Common myeloid progenitor, CD34-positive (primary cell): ENCODE measurements at regions of chr3 and their contacts with region 1.

Region 1: GRCh38 chr3:22887664-22888291 is 315.3 kb upstream of the UBE2E2 start:
- DNase-seq: peak; percentile 44 to 72 (median 71)
- H3K4me3 ChIP-seq: no peak overlapping the region
- H3K27ac ChIP-seq: no peak overlapping the region
- H3K4me1 ChIP-seq: no peaks in the 10 kb centered on the region
- H3K27me3 ChIP-seq: no peaks in the 10 kb centered on the region

Region 2: DNA sequence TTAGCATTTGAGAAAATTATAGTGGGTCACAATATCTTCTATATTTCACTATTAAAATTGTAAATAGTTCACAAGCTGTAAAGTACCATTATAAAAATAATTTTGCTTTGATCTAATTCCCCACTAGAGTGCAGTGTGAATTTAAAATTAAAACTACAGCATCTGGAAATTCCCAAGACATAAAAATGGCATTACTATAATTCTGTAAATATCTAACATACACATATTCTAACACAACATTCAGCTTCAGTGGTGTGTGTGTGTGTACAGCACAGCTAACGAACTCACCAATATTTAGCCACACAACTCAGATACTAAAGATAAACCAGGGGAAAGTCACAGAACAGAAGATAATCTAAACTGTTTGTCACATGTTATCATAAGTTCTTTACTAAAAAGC is 711.8 kb before region 1 on chr3:
- CTCF ChIA-PET with region 1: interaction called, 15 read pairs
- POLR2A ChIA-PET with region 1: no interaction called
- DNase-seq: peak; percentile 12 to 55 (median 28)
- H3K4me3 ChIP-seq: no peak overlapping the region
- H3K27ac ChIP-seq: peak overlapping the region in 1 of 2 experiments; percentile 51
- H3K4me1 ChIP-seq: peaks cover 0 to 4% (median 0%) of the 10 kb centered on the region in 4 experiments
- H3K27me3 ChIP-seq: no peaks in the 10 kb centered on the region

Region 3: GRCh38 chr3:22922317-22922716 is 34.5 kb after region 1 on chr3:
- CTCF ChIA-PET with region 1: no interaction called
- POLR2A ChIA-PET with region 1: no interaction called
- DNase-seq: peak; percentile 10 to 25 (median 21)
- H3K4me3 ChIP-seq: no peak overlapping the region
- H3K27ac ChIP-seq: no peak overlapping the region
- H3K4me1 ChIP-seq: no peaks in the 10 kb centered on the region
- H3K27me3 ChIP-seq: no peaks in the 10 kb centered on the region